ENCODE measurements at regions of chr3 and their contacts with region 1.

Region 1: DNA sequence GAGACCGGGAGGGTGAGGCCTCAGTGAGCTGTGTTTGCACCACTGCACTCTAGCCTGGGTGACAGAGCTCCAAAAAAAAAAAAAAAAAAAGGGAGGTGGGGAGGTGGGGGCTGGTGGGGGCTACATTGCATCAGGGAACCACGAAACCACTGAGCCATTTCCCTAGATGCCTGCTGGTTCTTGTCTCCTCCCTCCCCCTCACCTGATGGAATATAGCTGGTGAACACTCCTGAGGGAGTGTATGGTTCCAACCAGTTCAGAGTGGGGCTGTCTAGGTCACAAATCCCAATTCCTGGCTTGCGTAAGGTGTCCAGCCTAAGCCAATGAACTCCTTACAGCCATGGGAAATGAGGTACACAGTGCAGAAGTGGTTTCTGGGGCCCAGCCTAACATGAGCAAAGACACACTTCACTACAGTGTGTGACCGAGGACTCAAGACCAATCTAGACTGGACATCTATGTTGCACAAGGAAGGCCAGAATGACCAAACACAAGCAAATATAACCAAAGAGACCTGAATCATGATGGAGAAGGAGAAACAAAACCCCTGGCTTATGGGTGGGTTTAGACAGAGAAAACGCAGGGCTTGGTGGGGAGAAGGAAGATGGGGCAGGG is 39.1 kb upstream of the OSBPL11 start:
- DNase-seq: no peak
- ATAC-seq: no peak
- H3K4me3 ChIP-seq: no peak overlapping the region
- H3K27ac ChIP-seq: no peak overlapping the region
- H3K4me1 ChIP-seq: no peaks in the 10 kb centered on the region
- H3K27me3 ChIP-seq: no peaks in the 10 kb centered on the region
- CTCF ChIP-seq: no peak

Region 2: DNA sequence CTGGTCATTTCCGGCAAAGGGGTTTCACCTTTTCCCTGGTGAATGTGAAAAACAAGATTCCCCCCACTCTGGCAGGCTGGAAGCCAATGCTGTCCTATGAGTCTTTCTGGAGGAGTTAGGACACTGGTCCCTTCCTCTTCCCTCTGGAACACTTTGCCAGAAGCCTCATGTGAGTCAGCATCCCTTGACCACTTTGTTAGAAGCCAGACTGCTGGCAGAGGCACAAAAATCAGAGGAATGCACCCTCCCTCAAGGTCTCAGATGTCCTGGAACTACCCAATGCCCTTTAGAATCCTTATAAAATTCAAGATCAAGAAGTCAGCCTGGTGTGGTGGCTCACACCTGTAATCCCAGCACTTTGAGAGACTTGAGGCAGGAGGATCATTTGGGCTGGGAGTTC is 773.8 kb before region 1 on chr3:
- CTCF ChIA-PET with region 1: no interaction called
- POLR2A ChIA-PET with region 1: no interaction called
- in situ Hi-C with region 1: no loop called
- intact Hi-C with region 1: no loop called
- DNase-seq: peak; percentile 91
- ATAC-seq: peak; percentile 96
- H3K4me3 ChIP-seq: 0 out of 4 replicates have a peak overlapping the region, but pooled peaks of 1 of the 2 experiments have one; percentile 7
- H3K27ac ChIP-seq: peak overlapping the region; percentile 69
- H3K4me1 ChIP-seq: peaks cover 50% of the 10 kb centered on the region
- H3K27me3 ChIP-seq: no peaks in the 10 kb centered on the region
- CTCF ChIP-seq: no peak

Region 3: GRCh38 chr3:125767641-125768040 is 133.2 kb after region 1 on chr3:
- CTCF ChIA-PET with region 1: interaction called, 18 read pairs
- POLR2A ChIA-PET with region 1: no interaction called
- in situ Hi-C with region 1: no loop called
- intact Hi-C with region 1: no loop called
- DNase-seq: no peak
- ATAC-seq: no peak
- H3K4me3 ChIP-seq: no peak overlapping the region
- H3K27ac ChIP-seq: no peak overlapping the region
- H3K4me1 ChIP-seq: no peaks in the 10 kb centered on the region
- H3K27me3 ChIP-seq: no peaks in the 10 kb centered on the region
- CTCF ChIP-seq: no peak

Measured in Panc1 (cell line).